ENCODE measurements at regions of chr6 and their contacts with region 1.

Region 1: DNA sequence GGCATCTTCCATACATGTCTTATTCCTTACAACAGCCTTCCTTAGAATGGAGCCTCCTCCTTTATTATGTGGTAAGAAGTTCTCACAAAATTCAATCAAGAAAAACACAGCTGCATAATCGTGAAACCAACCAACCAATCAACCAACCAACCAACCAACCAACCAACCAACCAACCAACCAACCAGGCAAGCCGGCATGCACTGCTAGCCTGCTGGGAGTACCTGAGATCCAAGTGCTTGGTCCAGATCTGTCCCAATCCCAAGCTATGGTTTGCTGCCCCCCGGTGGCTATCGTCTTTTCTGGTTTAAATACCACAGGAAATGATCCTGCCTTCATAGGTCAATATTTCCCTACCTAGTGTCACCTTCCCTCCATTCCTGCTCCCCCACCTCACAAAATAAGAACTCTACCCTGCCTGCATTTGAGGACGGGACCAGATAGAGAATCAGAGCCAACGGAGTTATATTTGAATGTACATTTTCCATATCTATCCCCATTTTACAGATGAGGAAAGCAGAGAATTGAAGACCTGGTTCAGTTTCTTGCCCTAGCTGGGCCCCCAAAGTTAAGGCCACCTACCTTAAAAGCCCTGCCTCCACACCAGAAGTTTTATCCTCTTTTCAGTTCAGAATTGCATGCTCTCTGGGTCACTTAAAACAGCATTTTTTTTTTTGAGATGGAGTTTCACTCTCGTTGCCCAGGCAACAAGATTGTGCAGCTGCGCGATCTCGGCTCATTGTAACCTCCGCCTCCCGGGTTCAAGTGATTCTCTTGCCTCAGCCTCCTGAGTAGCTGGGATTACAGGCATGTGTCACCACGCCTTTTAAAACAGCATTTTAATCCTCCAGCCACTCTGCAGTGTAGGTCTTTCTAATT is 27.1 kb downstream of the RAB44 start:
- DNase-seq: peak; percentile 76
- H3K4me3 Mint-ChIP-seq: no peak overlapping the region
- H3K27ac Mint-ChIP-seq: no peak overlapping the region
- H3K4me1 Mint-ChIP-seq: peaks cover 40% of the 10 kb centered on the region
- H3K27me3 Mint-ChIP-seq: peaks cover 24% of the 10 kb centered on the region

Region 2: GRCh38 chr6:36615018-36615761 is 109.6 kb before region 1 on chr6:
- CTCF ChIA-PET with region 1: interaction called, 20 read pairs
- DNase-seq: peak; percentile 52
- H3K4me3 Mint-ChIP-seq: no peak overlapping the region
- H3K27ac Mint-ChIP-seq: no peak overlapping the region
- H3K4me1 Mint-ChIP-seq: peaks cover 17% of the 10 kb centered on the region
- H3K27me3 Mint-ChIP-seq: no peaks in the 10 kb centered on the region

Region 3: DNA sequence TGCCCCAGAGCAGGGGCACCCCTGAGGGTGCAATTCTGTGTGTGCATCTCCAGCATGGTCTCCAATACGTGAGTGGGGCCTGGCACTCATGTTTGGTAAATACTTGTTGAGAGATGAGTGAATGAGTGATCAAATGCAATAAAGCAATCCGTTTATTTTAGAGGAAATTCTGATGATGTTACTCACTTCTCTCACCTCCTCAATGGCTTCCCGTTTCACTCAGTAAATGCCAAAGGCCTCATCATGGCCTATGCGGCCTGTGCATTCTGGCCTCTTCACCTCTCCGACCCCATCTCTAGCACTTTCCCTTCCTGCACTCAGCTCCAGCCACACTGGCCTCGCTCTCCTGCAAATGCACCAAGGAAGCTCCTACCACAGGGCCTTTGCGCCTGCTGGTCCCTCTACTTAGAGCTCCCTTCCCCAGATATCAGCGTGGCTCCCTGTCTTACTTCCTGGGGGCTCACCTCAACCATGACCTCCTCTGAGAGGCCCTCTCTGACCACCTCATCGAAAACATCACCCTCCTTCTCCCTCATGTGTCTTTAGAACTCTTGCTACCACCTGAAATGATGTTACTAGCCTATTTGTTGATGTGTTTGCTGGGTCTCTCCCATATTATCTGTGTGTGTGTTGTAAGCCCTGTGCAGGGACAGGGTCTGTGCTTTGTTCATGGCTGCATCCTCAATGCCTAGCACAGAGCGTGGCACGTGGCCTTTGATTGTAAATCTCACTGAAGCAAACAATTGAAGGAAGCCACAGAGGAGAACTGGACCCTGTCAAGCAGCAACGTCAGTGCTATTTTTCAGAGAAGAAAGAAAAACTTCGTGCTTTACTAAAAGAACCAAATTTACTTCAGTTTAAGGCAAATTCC is 15.4 kb after region 1 on chr6:
- CTCF ChIA-PET with region 1: no interaction called
- DNase-seq: no peak
- H3K4me3 Mint-ChIP-seq: no peak overlapping the region
- H3K27ac Mint-ChIP-seq: no peak overlapping the region
- H3K4me1 Mint-ChIP-seq: peaks cover 24% of the 10 kb centered on the region
- H3K27me3 Mint-ChIP-seq: peaks cover 3% of the 10 kb centered on the region